ENCODE measurements at regions of chr10 and their contacts with region 1.

Region 1: DNA sequence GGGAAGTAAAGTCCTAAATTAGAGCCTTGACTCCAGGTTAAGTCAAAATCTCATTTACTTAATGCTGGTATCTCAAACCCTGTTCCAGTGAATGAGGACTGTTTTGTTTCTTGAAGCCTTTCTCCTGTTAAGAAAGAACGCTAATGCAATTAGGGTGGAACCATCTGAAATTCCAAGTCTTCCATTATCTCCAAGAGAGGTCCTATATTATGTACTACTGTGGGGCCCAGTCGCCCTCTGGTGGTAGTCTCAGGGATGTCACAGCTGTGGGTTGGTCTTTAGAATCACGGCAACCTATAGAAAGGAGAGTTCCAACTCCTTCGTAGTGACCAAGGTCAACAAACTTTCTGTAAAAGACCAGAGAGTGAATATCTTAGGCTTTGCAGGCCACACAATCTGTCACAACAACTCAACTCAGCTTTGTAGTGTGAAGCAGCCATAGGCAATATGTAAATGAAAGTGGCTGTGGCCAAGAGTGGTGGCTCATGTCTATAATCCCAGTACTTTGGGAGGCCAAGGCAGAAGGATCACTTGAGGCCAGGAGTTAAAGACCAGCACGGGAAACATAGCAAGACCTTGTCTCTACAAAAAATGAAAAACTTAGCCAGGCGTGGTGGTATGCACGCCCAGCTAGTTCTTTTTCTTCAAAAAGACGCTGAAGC is 9.3 kb downstream of the RPP38 start:
- DNase-seq: peak; percentile 31 to 87
- H3K4me3 ChIP-seq: no peak overlapping the region
- H3K27ac ChIP-seq: no peak overlapping the region
- H3K4me1 ChIP-seq: no peaks in the 10 kb centered on the region
- H3K27me3 ChIP-seq: peaks cover 0 to 2% (median 0%) of the 10 kb centered on the region in 4 experiments; a peak in 1 of 7 replicates
- CTCF ChIP-seq: peak; percentile 74 to 87 (median 87)
- EP300 ChIP-seq: no peak
- POLR2A ChIP-seq: no peak
- RAD21 ChIP-seq: peak; percentile 93 to 94

Region 2: DNA sequence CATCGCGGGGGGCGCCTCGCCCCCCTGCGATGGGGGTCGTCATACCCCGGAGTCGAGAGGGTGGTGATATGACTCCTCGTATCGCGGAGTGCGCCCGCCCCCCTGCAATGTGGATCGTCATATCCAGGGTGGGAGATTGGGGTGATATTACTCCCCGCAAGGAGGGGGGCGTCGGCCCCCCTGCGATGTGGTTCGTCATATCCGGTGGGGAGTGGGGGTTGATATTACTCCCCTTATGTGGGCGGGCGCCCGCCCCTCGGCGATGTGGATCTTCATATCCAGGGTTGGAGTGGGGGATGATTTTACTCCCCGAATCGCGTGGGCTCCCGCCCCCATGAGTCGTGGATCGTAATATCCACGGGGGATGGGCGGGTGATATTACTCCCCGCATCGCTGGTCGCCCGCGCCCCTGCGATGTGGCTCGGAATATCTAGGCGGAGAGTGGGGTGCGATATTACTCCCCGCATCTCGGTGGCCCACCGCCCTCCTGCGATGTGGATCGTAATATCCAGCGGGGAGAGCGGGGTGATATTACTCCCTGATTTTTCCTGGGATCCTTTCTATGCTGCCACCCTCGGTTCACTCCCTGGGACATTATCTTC is 110.4 kb before region 1 on chr10:
- CTCF ChIA-PET with region 1: interaction called, 18 read pairs
- POLR2A ChIA-PET with region 1: no interaction called
- DNase-seq: no peak
- H3K4me3 ChIP-seq: no peak overlapping the region
- H3K27ac ChIP-seq: no peak overlapping the region
- H3K4me1 ChIP-seq: no peaks in the 10 kb centered on the region
- H3K27me3 ChIP-seq: no peaks in the 10 kb centered on the region
- CTCF ChIP-seq: no peak
- EP300 ChIP-seq: no peak
- POLR2A ChIP-seq: no peak
- RAD21 ChIP-seq: no peak

Region 3: GRCh38 chr10:15084502-15084922 is 22.0 kb before region 1 on chr10:
- CTCF ChIA-PET with region 1: interaction called, 16 read pairs
- POLR2A ChIA-PET with region 1: interaction called, 4 read pairs
- DNase-seq: peak in 1 of 2 experiments; percentile 54
- H3K4me3 ChIP-seq: peak overlapping the region in 1 of 4 experiments; percentile 40; a peak in 1 of 8 replicates
- H3K27ac ChIP-seq: no peak overlapping the region
- H3K4me1 ChIP-seq: peaks cover 0 to 10% (median 5%) of the 10 kb centered on the region in 4 experiments; a peak in 5 of 7 replicates
- H3K27me3 ChIP-seq: no peaks in the 10 kb centered on the region
- CTCF ChIP-seq: no peak
- EP300 ChIP-seq: no peak
- POLR2A ChIP-seq: 0 out of 3 replicates have a peak, but pooled peaks of 1 of the 2 experiments have one; percentile 25
- RAD21 ChIP-seq: no peak